ENCODE measurements at regions of chr2 and their contacts with region 1.

Region 1: GRCh38 chr2:4656326-4656725 is 953.0 kb downstream of the DCDC2C start:
- DNase-seq: no peak
- ATAC-seq: no peak
- H3K4me3 ChIP-seq: no peak overlapping the region
- H3K27ac ChIP-seq: no peak overlapping the region
- H3K4me1 ChIP-seq: no peaks in the 10 kb centered on the region
- H3K27me3 ChIP-seq: no peaks in the 10 kb centered on the region
- CTCF ChIP-seq: no peak

Region 2: DNA sequence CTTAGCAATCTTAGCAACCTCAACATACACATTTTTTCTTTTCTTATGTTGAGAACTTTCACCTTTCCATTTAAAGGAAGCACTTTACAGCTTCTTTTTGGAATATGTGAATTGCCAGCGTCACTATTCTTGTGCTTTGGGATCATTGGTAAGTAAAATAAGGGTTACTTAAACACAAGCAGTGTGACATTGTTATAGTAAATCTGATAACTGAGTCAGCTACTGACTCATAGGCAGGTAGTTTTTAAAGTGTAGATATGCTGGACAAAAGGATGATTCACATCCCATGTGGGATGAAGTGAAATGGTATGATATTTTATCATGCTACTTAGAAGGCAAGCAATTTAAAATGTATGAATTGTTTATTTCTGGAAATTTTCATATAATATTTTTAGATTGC is 315.8 kb before region 1 on chr2:
- CTCF ChIA-PET with region 1: no interaction called
- POLR2A ChIA-PET with region 1: no interaction called
- in situ Hi-C with region 1: no loop called
- intact Hi-C with region 1: no loop called
- DNase-seq: no peak
- ATAC-seq: no peak
- H3K4me3 ChIP-seq: no peak overlapping the region
- H3K27ac ChIP-seq: no peak overlapping the region
- H3K4me1 ChIP-seq: no peaks in the 10 kb centered on the region
- H3K27me3 ChIP-seq: no peaks in the 10 kb centered on the region
- CTCF ChIP-seq: no peak

Region 3: GRCh38 chr2:4628998-4629501 is 27.3 kb before region 1 on chr2:
- CTCF ChIA-PET with region 1: no interaction called
- POLR2A ChIA-PET with region 1: no interaction called
- in situ Hi-C with region 1: no loop called
- intact Hi-C with region 1: loop called (anchors 1 kb)
- DNase-seq: no peak
- ATAC-seq: no peak
- H3K4me3 ChIP-seq: no peak overlapping the region
- H3K27ac ChIP-seq: no peak overlapping the region
- H3K4me1 ChIP-seq: no peaks in the 10 kb centered on the region
- H3K27me3 ChIP-seq: no peaks in the 10 kb centered on the region
- CTCF ChIP-seq: no peak